ENCODE measurements at regions of chr1 and their contacts with region 1.

Region 1: GRCh38 chr1:57036641-57037579 is 71.1 kb upstream of the C8B start:
- DNase-seq: no peak
- H3K4me3 ChIP-seq: no peak overlapping the region
- H3K27ac ChIP-seq: no peak overlapping the region
- H3K4me1 ChIP-seq: no peaks in the 10 kb centered on the region; a peak in 1 of 7 replicates
- H3K27me3 ChIP-seq: no peaks in the 10 kb centered on the region
- CTCF ChIP-seq: no peak
- EP300 ChIP-seq: no peak
- POLR2A ChIP-seq: no peak
- RAD21 ChIP-seq: no peak

Region 2: GRCh38 chr1:56973923-56974742 is 62.8 kb before region 1 on chr1:
- CTCF ChIA-PET with region 1: no interaction called
- POLR2A ChIA-PET with region 1: no interaction called
- DNase-seq: no peak
- H3K4me3 ChIP-seq: no peak overlapping the region
- H3K27ac ChIP-seq: no peak overlapping the region
- H3K4me1 ChIP-seq: no peaks in the 10 kb centered on the region
- H3K27me3 ChIP-seq: no peaks in the 10 kb centered on the region
- CTCF ChIP-seq: no peak
- EP300 ChIP-seq: no peak
- POLR2A ChIP-seq: no peak
- RAD21 ChIP-seq: no peak

Region 3: DNA sequence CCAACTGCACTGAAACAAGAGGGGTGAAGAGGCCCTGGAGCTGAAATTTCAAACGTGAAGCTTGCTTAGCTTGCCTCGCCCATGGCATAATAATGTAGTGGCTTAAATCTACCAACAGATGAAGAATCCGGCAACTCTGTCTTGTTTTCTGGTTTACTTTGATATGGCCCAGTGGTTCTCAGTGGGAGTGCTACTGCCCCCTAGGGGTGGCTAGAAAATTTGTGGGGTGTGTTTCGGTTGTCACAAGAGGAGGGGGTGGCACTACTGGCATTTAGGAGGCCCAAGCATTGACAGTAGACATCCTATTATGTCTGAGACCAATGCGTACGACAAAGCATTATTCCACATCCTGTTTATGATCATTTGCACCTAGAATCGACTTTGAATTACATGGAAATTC is 19.2 kb before region 1 on chr1:
- CTCF ChIA-PET with region 1: interaction called, 15 read pairs
- POLR2A ChIA-PET with region 1: no interaction called
- DNase-seq: peak in 1 of 2 experiments; percentile 61
- H3K4me3 ChIP-seq: no peak overlapping the region
- H3K27ac ChIP-seq: no peak overlapping the region
- H3K4me1 ChIP-seq: no peaks in the 10 kb centered on the region
- H3K27me3 ChIP-seq: no peaks in the 10 kb centered on the region
- CTCF ChIP-seq: peak; percentile 55 to 72 (median 71)
- EP300 ChIP-seq: no peak
- POLR2A ChIP-seq: no peak
- RAD21 ChIP-seq: peak; percentile 53 to 64

Region 4: DNA sequence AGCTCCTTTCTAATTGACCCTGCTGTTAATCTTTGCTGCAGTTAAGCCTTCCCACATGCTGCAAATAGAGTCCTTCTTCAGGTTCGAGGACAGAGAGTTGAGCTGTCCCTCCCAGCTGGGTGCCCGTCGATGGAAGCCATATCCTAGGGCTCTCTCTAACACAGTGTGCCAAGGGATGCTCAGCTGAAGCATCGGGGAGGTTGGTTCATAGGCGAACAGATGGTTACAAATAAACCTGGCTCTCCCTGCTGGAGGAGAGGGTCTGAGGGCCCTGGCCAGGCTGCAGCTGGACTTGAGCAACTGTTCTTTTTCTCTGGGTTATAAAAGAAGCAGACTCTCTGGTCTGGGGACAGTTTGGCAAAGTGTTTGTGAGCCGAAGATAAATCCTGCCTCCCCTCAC is 49.2 kb after region 1 on chr1:
- CTCF ChIA-PET with region 1: no interaction called
- POLR2A ChIA-PET with region 1: no interaction called
- DNase-seq: no peak
- H3K4me3 ChIP-seq: no peak overlapping the region
- H3K27ac ChIP-seq: no peak overlapping the region
- H3K4me1 ChIP-seq: peaks cover 0 to 2% (median 0%) of the 10 kb centered on the region in 4 experiments; a peak in 2 of 7 replicates
- H3K27me3 ChIP-seq: no peaks in the 10 kb centered on the region
- CTCF ChIP-seq: no peak
- EP300 ChIP-seq: no peak
- POLR2A ChIP-seq: no peak
- RAD21 ChIP-seq: no peak

Measured in H1 (cell line).